ENCODE measurements at regions of chr3 and their contacts with region 1.

Region 1: DNA sequence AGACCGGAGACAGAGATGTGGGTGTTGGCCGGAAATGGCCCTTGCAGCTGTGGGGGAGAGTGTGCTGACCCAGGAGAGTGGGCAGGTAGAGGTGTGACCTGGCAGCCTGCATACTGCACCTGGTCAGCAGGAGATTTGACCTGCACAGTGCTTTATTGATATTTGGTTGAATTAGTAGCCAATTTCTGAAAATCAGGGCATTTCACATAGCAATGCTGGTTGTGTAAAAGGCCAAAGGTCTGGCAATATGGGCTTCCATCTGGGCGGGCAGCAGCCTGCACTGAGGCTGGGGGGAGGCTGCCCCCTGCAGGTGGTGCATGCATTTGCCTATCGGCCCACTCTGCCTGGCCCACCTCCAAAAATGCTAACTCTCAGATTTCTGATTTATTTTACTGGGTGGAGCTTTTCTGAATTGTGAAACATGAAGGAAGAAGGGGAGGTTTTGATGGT is 9.4 kb upstream of the MGLL start:
- DNase-seq: no peak
- ATAC-seq: peak; percentile 68
- H3K4me3 ChIP-seq: no peak overlapping the region
- H3K4me3 Mint-ChIP-seq: no peak overlapping the region
- H3K27ac ChIP-seq: no peak overlapping the region
- H3K27ac Mint-ChIP-seq: no peak overlapping the region
- H3K4me1 ChIP-seq: no peaks in the 10 kb centered on the region
- H3K4me1 Mint-ChIP-seq: peaks cover 0 to 4% (median 0%) of the 10 kb centered on the region in 7 donors
- H3K27me3 ChIP-seq: no peaks in the 10 kb centered on the region
- H3K27me3 Mint-ChIP-seq: peaks cover 11 to 55% (median 25%) of the 10 kb centered on the region in 5 donors

Region 2: DNA sequence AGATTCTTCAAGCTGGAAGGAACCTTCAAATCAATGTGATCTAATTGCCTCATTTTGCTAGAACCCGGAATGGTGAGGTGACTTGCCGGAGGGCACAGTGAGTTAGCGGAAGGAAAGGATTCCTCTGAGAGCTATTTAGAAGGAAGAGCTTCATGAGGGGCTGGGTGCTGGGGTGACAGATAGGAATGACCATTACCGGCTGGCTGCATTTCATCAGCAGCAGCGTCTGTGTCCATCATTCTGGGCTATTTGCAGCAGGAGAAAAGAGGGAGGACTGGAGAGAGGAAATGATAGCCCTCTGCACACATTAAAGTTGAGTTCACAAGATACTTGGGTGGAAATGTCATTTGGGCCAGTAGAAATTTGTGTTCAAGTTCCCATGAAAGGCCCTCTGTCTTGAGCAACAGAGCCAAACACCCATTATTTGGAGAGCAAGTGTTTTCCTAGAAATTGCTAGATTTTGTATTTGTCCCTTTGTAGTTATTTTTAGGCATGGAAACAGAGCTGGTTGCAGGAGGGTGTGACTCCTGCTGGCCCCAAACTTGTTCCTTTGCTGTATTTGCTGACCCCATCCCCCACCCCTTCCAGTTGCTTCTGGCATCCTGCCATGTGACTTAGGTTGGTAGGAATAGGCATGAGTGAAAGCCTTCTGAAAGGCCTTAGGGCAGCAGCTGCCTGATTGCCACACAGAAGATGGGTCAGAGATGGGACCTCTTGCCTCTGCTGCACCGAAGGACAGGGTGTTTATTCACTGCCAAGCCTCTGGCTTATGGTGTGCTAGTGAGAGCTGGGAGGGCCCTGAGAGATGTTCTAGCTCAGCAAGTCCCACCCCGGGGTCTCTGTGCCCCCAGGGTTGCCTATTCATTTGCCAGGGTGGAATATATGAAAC is 936.3 kb before region 1 on chr3:
- CTCF ChIA-PET with region 1: no interaction called
- POLR2A ChIA-PET with region 1: no interaction called
- intact Hi-C with region 1: no loop called
- DNase-seq: no peak
- ATAC-seq: no peak
- H3K4me3 ChIP-seq: no peak overlapping the region
- H3K4me3 Mint-ChIP-seq: no peak overlapping the region
- H3K27ac ChIP-seq: no peak overlapping the region
- H3K27ac Mint-ChIP-seq: no peak overlapping the region
- H3K4me1 ChIP-seq: no peaks in the 10 kb centered on the region
- H3K4me1 Mint-ChIP-seq: peaks cover 0 to 10% (median 0%) of the 10 kb centered on the region in 7 donors
- H3K27me3 ChIP-seq: no peaks in the 10 kb centered on the region
- H3K27me3 Mint-ChIP-seq: peaks cover 0 to 19% (median 0%) of the 10 kb centered on the region in 5 donors

Region 3: GRCh38 chr3:127652231-127652995 is 179.3 kb before region 1 on chr3:
- CTCF ChIA-PET with region 1: no interaction called
- POLR2A ChIA-PET with region 1: no interaction called
- intact Hi-C with region 1: loop called in 1 of 2 experiments (anchors 5 kb)
- DNase-seq: peak in 3 of 9 donors; percentile 16 to 44 (median 35)
- ATAC-seq: peak; percentile 83
- H3K4me3 ChIP-seq: no peak overlapping the region
- H3K4me3 Mint-ChIP-seq: no peak overlapping the region
- H3K27ac ChIP-seq: no peak overlapping the region
- H3K27ac Mint-ChIP-seq: peak overlapping the region in 1 of 9 donors; percentile 3
- H3K4me1 ChIP-seq: no peaks in the 10 kb centered on the region
- H3K4me1 Mint-ChIP-seq: peaks cover 0 to 2% (median 0%) of the 10 kb centered on the region in 7 donors
- H3K27me3 ChIP-seq: no peaks in the 10 kb centered on the region
- H3K27me3 Mint-ChIP-seq: peaks cover 0 to 4% (median 0%) of the 10 kb centered on the region in 5 donors

Region 4: DNA sequence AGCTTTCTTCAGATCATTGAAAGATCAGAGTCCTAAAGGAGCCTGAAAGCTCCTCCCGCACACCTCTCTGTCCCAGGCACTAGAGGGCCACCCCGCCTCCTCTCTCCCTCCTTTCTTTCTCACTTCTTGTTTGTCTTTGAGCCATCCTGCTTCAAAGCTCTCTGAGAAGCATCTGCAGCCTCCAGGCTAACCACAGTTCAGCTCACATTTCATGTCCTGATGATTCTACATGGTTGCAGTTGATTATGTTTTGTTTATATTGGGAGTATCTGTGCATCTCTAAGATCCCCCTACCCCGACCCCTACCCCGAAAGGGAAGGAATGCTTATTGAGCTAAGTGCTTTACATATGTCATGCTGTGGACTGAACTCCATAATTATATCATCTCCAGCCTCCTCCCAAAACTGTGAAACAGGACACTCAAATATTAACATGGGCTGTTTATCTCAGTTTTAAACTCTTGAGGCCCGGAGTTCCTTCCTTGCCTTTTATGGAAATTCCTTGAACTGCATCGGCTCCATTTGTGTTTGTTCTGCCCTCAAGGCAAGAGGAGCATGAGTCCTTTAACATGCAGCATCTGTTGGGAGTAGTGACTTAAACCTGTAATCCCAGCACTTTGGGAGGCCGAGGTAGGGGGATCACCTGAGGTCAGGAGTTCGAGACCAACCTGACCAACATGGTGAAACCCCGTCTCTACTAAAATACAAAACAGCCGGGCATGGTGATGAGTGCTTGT is 40.4 kb before region 1 on chr3:
- CTCF ChIA-PET with region 1: no interaction called
- POLR2A ChIA-PET with region 1: no interaction called
- intact Hi-C with region 1: loop called in 1 of 2 experiments (anchors 2 kb)
- DNase-seq: peak in 4 of 9 donors; percentile 1 to 6 (median 4)
- ATAC-seq: peak; percentile 57
- H3K4me3 ChIP-seq: no peak overlapping the region
- H3K4me3 Mint-ChIP-seq: peak overlapping the region in 1 of 10 donors; percentile 14
- H3K27ac ChIP-seq: no peak overlapping the region
- H3K27ac Mint-ChIP-seq: no peak overlapping the region
- H3K4me1 ChIP-seq: no peaks in the 10 kb centered on the region
- H3K4me1 Mint-ChIP-seq: peaks cover 0 to 8% (median 4%) of the 10 kb centered on the region in 7 donors
- H3K27me3 ChIP-seq: no peaks in the 10 kb centered on the region
- H3K27me3 Mint-ChIP-seq: peaks cover 11 to 32% (median 24%) of the 10 kb centered on the region in 5 donors